ENCODE measurements at regions of chr7 and their contacts with region 1.

Region 1: GRCh38 chr7:105876091-105876963 is at the start of gene ATXN7L1:
- DNase-seq: peak; percentile 95
- ATAC-seq: peak; percentile 87
- H3K4me3 Mint-ChIP-seq: peak within 1 kb of the TSS; percentile 98
- H3K27ac Mint-ChIP-seq: peak within 1 kb of the TSS; percentile 99
- H3K4me1 Mint-ChIP-seq: peaks cover 60% of the 10 kb centered on the region
- H3K27me3 Mint-ChIP-seq: peaks cover 10% of the 10 kb centered on the region
- CTCF ChIP-seq: peak; percentile 52; the same call in 1 of the 2 replicates
- total RNA-seq, gene ATXN7L1: 36.0 to 38.5 TPM (median 37.7 TPM) in 3 replicates

Region 2: GRCh38 chr7:105691733-105692564 is 184.4 kb before region 1 on chr7:
- CTCF ChIA-PET with region 1: interaction called, 5 read pairs
- POLR2A ChIA-PET with region 1: interaction called, 11 read pairs
- DNase-seq: peak; percentile 23
- ATAC-seq: no peak
- H3K4me3 Mint-ChIP-seq: peak overlapping the region; percentile 74
- H3K27ac Mint-ChIP-seq: peak overlapping the region; percentile 99
- H3K4me1 Mint-ChIP-seq: peaks cover 89% of the 10 kb centered on the region
- H3K27me3 Mint-ChIP-seq: no peaks in the 10 kb centered on the region
- CTCF ChIP-seq: no peak

Region 3: GRCh38 chr7:105759670-105760550 is 116.4 kb before region 1 on chr7:
- CTCF ChIA-PET with region 1: interaction called, 33 read pairs
- POLR2A ChIA-PET with region 1: interaction called, 5 read pairs
- DNase-seq: peak; percentile 38
- ATAC-seq: no peak; the same call in 1 of the 2 replicates
- H3K4me3 Mint-ChIP-seq: no peak overlapping the region
- H3K27ac Mint-ChIP-seq: peak overlapping the region; percentile 61
- H3K4me1 Mint-ChIP-seq: peaks cover 38% of the 10 kb centered on the region
- H3K27me3 Mint-ChIP-seq: no peaks in the 10 kb centered on the region
- CTCF ChIP-seq: no peak

Region 4: DNA sequence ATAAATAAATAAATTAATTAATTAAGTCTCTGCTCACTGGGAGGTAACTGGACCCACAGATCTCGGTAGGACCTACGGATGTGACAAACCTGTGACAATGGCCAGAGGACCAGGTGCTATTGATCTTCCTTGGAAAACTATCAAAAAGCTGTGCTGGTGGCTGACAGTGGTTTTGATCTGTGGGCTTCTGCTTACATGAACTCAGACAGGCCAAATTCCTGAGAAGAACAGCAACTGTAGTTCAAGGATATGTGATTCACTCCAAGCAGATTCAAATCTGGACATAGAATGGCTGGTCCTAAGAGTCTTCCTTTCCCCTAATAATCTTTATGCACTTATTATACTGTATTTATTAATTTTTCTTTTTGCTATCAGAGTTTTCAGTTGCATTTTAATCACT is 80.0 kb before region 1 on chr7:
- CTCF ChIA-PET with region 1: interaction called, 13 read pairs
- POLR2A ChIA-PET with region 1: no interaction called
- DNase-seq: no peak
- ATAC-seq: no peak
- H3K4me3 Mint-ChIP-seq: no peak overlapping the region
- H3K27ac Mint-ChIP-seq: no peak overlapping the region
- H3K4me1 Mint-ChIP-seq: peaks cover 59% of the 10 kb centered on the region
- H3K27me3 Mint-ChIP-seq: no peaks in the 10 kb centered on the region
- CTCF ChIP-seq: no peak

Region 5: GRCh38 chr7:105849122-105849855 is 27.0 kb before region 1 on chr7:
- CTCF ChIA-PET with region 1: interaction called, 11 read pairs
- POLR2A ChIA-PET with region 1: no interaction called
- DNase-seq: peak; percentile 56
- ATAC-seq: peak; percentile 90
- H3K4me3 Mint-ChIP-seq: peak overlapping the region; percentile 24
- H3K27ac Mint-ChIP-seq: peak overlapping the region; percentile 89
- H3K4me1 Mint-ChIP-seq: peaks cover 58% of the 10 kb centered on the region
- H3K27me3 Mint-ChIP-seq: no peaks in the 10 kb centered on the region
- CTCF ChIP-seq: no peak

Region 6: DNA sequence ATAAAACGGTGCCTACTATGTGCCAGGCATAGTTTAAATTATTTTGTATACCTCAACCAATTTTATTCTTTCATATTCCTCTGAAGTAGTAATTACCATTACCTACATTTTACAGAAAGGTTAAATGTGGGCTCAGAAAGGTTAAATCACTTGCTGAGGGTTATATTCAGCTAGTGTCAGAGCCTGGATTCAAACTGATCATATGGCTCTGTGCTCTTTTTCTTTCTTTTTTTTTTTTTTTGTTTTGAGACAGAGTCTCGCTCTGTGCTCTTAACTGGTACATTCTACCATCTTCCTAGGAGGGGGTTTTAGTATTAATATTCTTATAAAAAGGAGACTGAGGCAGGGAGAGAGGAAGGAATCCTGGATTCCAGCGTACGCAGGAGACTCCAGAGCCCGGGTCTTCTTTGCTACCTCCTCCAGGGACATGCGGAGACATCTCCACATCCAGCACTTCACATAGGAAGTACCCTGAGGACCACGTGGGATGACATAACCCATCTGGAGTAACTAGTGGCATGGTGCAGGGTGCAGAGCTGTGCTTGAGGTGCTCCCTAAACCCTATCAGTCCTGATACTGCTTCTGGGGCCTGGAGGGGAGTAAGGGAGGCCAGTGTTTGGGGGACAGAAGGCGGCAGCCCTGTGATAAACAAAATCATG is 29.7 kb after region 1 on chr7:
- CTCF ChIA-PET with region 1: interaction called, 19 read pairs
- POLR2A ChIA-PET with region 1: interaction called, 7 read pairs
- DNase-seq: no peak
- ATAC-seq: peak; percentile 63
- H3K4me3 Mint-ChIP-seq: peak overlapping the region; percentile 32; the same call in 1 of the 2 replicates
- H3K27ac Mint-ChIP-seq: peak overlapping the region; percentile 96
- H3K4me1 Mint-ChIP-seq: peaks cover 38% of the 10 kb centered on the region
- H3K27me3 Mint-ChIP-seq: no peaks in the 10 kb centered on the region
- CTCF ChIP-seq: no peak

Region 7: DNA sequence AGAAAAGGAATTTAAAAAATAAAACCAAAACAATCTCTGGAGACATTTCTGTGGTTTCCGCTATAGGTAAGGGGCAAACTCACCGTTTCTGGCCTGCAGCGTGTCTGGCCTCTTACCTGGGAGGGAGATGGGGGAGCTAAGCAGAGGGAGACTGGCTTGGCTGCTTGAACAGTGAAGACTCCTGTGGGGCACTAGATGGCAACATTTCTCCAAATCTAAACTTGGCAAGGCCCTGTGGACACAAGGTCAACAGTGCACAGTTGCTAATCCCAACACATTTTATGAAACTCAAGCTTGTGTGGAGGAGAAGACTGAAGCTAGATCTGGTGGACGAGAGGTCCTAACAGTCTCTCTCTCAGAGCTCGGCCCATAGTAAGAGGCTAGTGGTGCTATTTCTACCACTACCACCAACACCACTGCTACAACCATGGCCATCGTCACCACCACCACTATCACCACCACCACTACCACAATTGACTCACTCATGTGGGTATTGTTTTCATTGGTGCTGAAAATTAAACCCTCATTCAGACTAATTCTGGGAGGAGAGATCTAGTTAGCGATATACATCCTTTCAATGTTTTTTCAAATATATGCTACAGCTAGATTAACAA is 58.4 kb after region 1 on chr7:
- CTCF ChIA-PET with region 1: interaction called, 10 read pairs
- POLR2A ChIA-PET with region 1: no interaction called
- DNase-seq: peak; percentile 37
- ATAC-seq: peak; percentile 94
- H3K4me3 Mint-ChIP-seq: no peak overlapping the region
- H3K27ac Mint-ChIP-seq: no peak overlapping the region
- H3K4me1 Mint-ChIP-seq: peaks cover 25% of the 10 kb centered on the region
- H3K27me3 Mint-ChIP-seq: no peaks in the 10 kb centered on the region
- CTCF ChIP-seq: no peak

Region 8: GRCh38 chr7:106023369-106024322 is 147.3 kb after region 1 on chr7:
- CTCF ChIA-PET with region 1: no interaction called
- POLR2A ChIA-PET with region 1: no interaction called
- DNase-seq: no peak
- ATAC-seq: no peak
- H3K4me3 Mint-ChIP-seq: no peak overlapping the region
- H3K27ac Mint-ChIP-seq: no peak overlapping the region
- H3K4me1 Mint-ChIP-seq: peaks cover 37% of the 10 kb centered on the region
- H3K27me3 Mint-ChIP-seq: no peaks in the 10 kb centered on the region; the same call in 1 of the 2 replicates
- CTCF ChIP-seq: no peak